ENCODE measurements at regions of chr1 and their contacts with region 1.

Region 1: GRCh38 chr1:206030714-206031113 is 7.0 kb upstream of the CTSE start:
- DNase-seq: peak in 4 of 5 donors; percentile 39 to 62 (median 54)
- ATAC-seq: peak in 3 of 4 donors; percentile 78 to 83 (median 80)
- H3K4me3 ChIP-seq: no peak overlapping the region
- H3K27ac ChIP-seq: no peak overlapping the region
- H3K4me1 ChIP-seq: peaks cover 0 to 13% (median 0%) of the 10 kb centered on the region in 12 donors
- H3K27me3 ChIP-seq: peaks cover 0 to 5% (median 0%) of the 10 kb centered on the region in 9 donors
- CTCF ChIP-seq: peak; percentile 34 to 86 (median 70)
- POLR2A ChIP-seq: no peak

Region 2: GRCh38 chr1:205827623-205828022 is 203.1 kb before region 1 on chr1:
- intact Hi-C with region 1: no loop called
- DNase-seq: peak in 1 of 5 donors; percentile 55
- ATAC-seq: peak in 3 of 4 donors; percentile 41 to 75 (median 68)
- H3K4me3 ChIP-seq: no peak overlapping the region
- H3K27ac ChIP-seq: peak overlapping the region in 4 of 12 donors; percentile 50 to 73 (median 54)
- H3K4me1 ChIP-seq: peaks cover 0 to 32% (median 19%) of the 10 kb centered on the region in 12 donors
- H3K27me3 ChIP-seq: no peaks in the 10 kb centered on the region
- CTCF ChIP-seq: peak in 1 of 12 donors; percentile 7
- POLR2A ChIP-seq: no peak

Region 3: GRCh38 chr1:205983925-205984725 is 46.6 kb before region 1 on chr1:
- intact Hi-C with region 1: loop called in 2 of 10 experiments (anchors 1 to 5 kb)
- DNase-seq: peak; percentile 72 to 83 (median 75)
- ATAC-seq: peak; percentile 53 to 86 (median 84)
- H3K4me3 ChIP-seq: no peak overlapping the region
- H3K27ac ChIP-seq: no peak overlapping the region
- H3K4me1 ChIP-seq: peaks cover 0 to 40% (median 17%) of the 10 kb centered on the region in 12 donors
- H3K27me3 ChIP-seq: no peaks in the 10 kb centered on the region
- CTCF ChIP-seq: peak; percentile 56 to 85 (median 76)
- POLR2A ChIP-seq: no peak

Region 4: DNA sequence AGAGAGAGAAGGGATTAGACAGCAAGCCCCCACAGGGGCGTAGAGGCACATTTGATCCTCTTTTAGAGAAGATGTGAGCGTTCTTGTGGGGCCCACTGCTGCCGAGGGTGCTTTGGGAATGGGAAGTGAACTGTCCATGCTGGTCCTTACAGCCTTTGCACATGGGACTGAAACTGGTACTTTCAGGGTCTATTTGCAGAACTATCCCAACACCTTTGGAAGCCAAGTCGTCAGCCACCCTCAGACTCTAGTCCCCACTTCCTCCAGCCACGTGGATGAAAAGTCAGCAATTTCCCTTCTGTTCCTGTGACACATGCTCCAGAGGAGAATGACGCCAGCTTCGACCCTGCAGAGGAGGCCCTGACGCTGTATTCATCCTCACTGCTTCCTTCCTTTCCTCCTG is 24.9 kb before region 1 on chr1:
- intact Hi-C with region 1: loop called in 1 of 10 experiments (anchors 2 kb)
- DNase-seq: no peak
- ATAC-seq: peak in 1 of 4 donors; percentile 50
- H3K4me3 ChIP-seq: no peak overlapping the region
- H3K27ac ChIP-seq: peak overlapping the region in 1 of 12 donors; percentile 33
- H3K4me1 ChIP-seq: peaks cover 0 to 49% (median 13%) of the 10 kb centered on the region in 12 donors
- H3K27me3 ChIP-seq: no peaks in the 10 kb centered on the region
- CTCF ChIP-seq: no peak
- POLR2A ChIP-seq: no peak

Region 5: GRCh38 chr1:206075786-206076755 is 45.4 kb after region 1 on chr1:
- intact Hi-C with region 1: no loop called
- DNase-seq: no peak
- ATAC-seq: no peak
- H3K4me3 ChIP-seq: no peak overlapping the region
- H3K27ac ChIP-seq: no peak overlapping the region
- H3K4me1 ChIP-seq: no peaks in the 10 kb centered on the region
- H3K27me3 ChIP-seq: peaks cover 0 to 4% (median 0%) of the 10 kb centered on the region in 9 donors
- CTCF ChIP-seq: no peak
- POLR2A ChIP-seq: no peak

Region 6: DNA sequence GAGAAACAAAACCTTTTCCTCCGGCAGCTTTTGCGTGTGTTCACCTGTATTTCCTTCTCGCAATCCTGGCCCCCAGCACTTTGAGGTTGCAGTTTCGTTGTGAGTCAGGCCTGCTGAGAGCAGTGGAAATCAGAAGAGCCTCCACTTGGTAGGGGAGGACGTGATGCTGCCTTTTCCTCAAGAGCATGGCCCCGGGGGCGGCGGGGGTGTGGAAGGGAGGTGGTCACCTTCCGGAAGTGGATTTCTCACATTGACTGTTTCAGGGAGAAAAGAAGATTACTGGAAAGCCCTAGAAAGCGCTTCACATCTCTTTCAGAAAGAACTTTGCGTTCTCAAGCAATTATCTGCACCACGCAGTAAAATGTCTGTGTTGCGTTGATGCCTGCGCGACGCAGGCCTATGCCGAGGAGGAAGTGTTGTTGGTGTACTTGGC is 753.8 kb after region 1 on chr1:
- intact Hi-C with region 1: no loop called
- DNase-seq: no peak
- ATAC-seq: no peak
- H3K4me3 ChIP-seq: no peak overlapping the region
- H3K27ac ChIP-seq: peak overlapping the region in 1 of 12 donors; percentile 33
- H3K4me1 ChIP-seq: peaks cover 0 to 31% (median 0%) of the 10 kb centered on the region in 12 donors
- H3K27me3 ChIP-seq: no peaks in the 10 kb centered on the region
- CTCF ChIP-seq: no peak
- POLR2A ChIP-seq: no peak

Measured in heart left ventricle (tissue), 16 donors.